Endothelial cell of umbilical vein (primary cell): ENCODE measurements at regions of chr1 and their contacts with region 1.

Region 1: DNA sequence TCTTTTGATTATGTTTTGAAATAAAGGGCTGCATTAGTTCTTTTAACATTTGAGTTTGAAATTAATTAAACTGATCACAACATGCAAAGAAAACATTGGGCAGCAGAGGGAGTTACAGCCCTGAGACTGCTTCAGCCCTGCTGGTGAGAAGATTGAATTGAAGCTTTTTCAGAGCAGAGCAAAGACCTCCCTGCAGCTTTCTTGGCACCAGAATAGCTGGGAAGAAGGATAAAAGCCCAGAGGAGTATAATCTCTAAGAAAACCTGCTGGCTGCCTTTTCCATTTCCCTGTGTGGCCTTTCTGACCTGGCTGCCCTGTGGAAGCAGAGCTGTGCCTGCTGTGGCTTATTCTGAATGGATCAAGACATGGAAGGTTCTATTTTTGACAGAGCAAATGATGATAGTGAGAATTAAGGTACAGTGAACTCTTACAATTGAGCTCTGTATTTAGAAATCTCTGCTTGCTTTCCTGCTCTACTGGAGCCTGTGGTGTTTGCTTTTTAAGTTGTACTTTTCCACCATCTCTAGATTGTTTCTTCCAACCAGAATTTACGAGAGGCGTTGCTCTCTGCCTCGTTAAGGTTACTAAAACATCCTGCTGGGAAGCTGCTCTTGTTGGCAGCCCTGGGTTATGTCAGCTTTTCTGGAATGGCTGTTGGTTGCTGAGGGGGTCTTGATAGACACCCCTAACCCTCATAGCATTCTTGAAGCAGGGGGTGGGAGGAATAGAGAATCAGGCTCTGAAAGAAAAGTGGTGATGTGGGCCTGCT is 9.9 kb downstream of the SNRPE start:
- DNase-seq: peak; percentile 82
- H3K4me3 ChIP-seq: no peak overlapping the region
- H3K27ac ChIP-seq: no peak overlapping the region
- H3K4me1 ChIP-seq: peaks cover 14% of the 10 kb centered on the region
- H3K27me3 ChIP-seq: no peaks in the 10 kb centered on the region
- CTCF ChIP-seq: peak; percentile 86 to 90
- POLR2A ChIP-seq: no peak

Region 2: DNA sequence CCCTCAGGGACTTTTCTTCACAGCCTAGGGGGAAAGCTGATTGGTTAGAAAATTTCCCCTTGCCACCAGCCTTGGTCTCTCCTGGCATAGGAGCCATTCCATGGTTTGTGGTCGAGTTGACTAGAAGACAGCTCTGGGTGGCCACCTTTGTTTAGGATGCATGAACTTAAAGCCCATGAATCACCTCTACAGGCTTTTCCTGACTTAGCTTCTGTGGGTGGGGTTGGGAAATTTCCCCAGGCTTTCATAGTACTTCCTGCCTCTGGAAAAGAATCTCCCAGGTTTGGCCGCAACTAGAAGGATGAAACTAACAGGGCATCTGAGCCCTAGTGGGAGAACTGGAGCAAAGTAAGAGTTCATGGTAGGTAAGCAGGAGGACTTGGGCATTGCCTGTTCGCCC is 62.7 kb after region 1 on chr1:
- CTCF ChIA-PET with region 1: interaction called, 12 read pairs
- POLR2A ChIA-PET with region 1: no interaction called
- dilution Hi-C with region 1: no loop called
- intact Hi-C with region 1: no loop called
- DNase-seq: no peak
- H3K4me3 ChIP-seq: no peak overlapping the region
- H3K27ac ChIP-seq: no peak overlapping the region
- H3K4me1 ChIP-seq: no peaks in the 10 kb centered on the region
- H3K27me3 ChIP-seq: peaks cover 4 to 13% of the 10 kb centered on the region in 2 experiments
- CTCF ChIP-seq: no peak
- POLR2A ChIP-seq: no peak

Region 3: GRCh38 chr1:204051258-204051657 is 180.0 kb after region 1 on chr1:
- CTCF ChIA-PET with region 1: interaction called, 15 read pairs
- POLR2A ChIA-PET with region 1: no interaction called
- dilution Hi-C with region 1: no loop called
- intact Hi-C with region 1: no loop called
- DNase-seq: no peak
- H3K4me3 ChIP-seq: no peak overlapping the region
- H3K27ac ChIP-seq: no peak overlapping the region
- H3K4me1 ChIP-seq: no peaks in the 10 kb centered on the region
- H3K27me3 ChIP-seq: no peaks in the 10 kb centered on the region
- CTCF ChIP-seq: no peak
- POLR2A ChIP-seq: no peak

Region 4: GRCh38 chr1:204072931-204073836 is 201.9 kb after region 1 on chr1 and contains the start of gene SOX13:
- CTCF ChIA-PET with region 1: interaction called, 83 read pairs
- POLR2A ChIA-PET with region 1: interaction called, 4 read pairs
- dilution Hi-C with region 1: no loop called
- intact Hi-C with region 1: loop called (anchors 1 kb)
- DNase-seq: peak; percentile 86
- H3K4me3 ChIP-seq: peak within 1 kb of the TSS; percentile 42 to 73 (median 66)
- H3K27ac ChIP-seq: peak within 1 kb of the TSS; percentile 27
- H3K4me1 ChIP-seq: peaks cover 14% of the 10 kb centered on the region
- H3K27me3 ChIP-seq: no peaks in the 10 kb centered on the region
- CTCF ChIP-seq: peak in 1 of 2 donors; percentile 10
- POLR2A ChIP-seq: peak; percentile 94
- total RNA-seq, gene SOX13: 38.0 and 40.8 TPM in 2 replicates

Region 5: DNA sequence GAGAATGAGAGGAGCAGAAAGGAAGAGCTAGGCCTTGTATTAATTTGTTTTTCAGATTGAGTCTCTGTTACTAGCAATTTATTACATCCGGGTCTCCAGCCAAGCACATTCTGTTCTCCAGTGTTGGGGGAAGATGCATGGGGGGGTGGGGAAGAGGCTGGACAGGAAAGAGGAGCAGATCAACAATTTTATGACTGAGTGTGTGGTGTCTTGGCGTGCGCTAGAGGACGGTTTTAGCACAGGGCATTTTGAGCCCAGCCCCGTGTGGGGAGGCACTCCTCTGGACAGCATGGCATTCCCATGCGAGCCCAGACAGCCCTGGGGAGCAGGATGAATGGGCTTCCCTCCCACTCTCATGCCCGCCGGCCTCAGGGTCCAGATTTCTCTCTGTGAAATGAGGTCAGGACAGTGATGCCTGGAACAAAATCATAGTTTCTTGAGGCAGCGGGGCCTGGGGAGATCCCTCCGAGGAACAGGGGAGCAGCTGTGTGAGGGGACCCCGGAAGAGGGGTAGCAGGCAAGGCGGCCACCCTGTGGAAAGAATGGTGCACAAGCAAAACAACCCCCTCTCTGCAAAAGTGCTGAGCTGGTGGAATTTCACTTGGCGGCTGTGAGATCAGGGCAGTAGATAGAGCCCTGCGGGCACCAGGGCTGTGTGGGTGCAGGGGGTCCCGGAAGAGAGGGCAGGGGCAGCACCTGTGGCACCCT is 217.9 kb after region 1 on chr1:
- CTCF ChIA-PET with region 1: interaction called, 13 read pairs
- POLR2A ChIA-PET with region 1: no interaction called
- dilution Hi-C with region 1: no loop called
- intact Hi-C with region 1: no loop called
- DNase-seq: peak; percentile 50
- H3K4me3 ChIP-seq: no peak overlapping the region
- H3K27ac ChIP-seq: peak overlapping the region; percentile 6
- H3K4me1 ChIP-seq: peaks cover 25% of the 10 kb centered on the region
- H3K27me3 ChIP-seq: no peaks in the 10 kb centered on the region
- CTCF ChIP-seq: no peak
- POLR2A ChIP-seq: no peak

Region 6: GRCh38 chr1:204114606-204115005 is 243.3 kb after region 1 on chr1:
- CTCF ChIA-PET with region 1: interaction called, 903 read pairs
- POLR2A ChIA-PET with region 1: no interaction called
- dilution Hi-C with region 1: no loop called
- intact Hi-C with region 1: no loop called
- DNase-seq: no peak
- H3K4me3 ChIP-seq: no peak overlapping the region
- H3K27ac ChIP-seq: no peak overlapping the region
- H3K4me1 ChIP-seq: peaks cover 9% of the 10 kb centered on the region
- H3K27me3 ChIP-seq: no peaks in the 10 kb centered on the region
- CTCF ChIP-seq: no peak
- POLR2A ChIP-seq: no peak

Region 7: DNA sequence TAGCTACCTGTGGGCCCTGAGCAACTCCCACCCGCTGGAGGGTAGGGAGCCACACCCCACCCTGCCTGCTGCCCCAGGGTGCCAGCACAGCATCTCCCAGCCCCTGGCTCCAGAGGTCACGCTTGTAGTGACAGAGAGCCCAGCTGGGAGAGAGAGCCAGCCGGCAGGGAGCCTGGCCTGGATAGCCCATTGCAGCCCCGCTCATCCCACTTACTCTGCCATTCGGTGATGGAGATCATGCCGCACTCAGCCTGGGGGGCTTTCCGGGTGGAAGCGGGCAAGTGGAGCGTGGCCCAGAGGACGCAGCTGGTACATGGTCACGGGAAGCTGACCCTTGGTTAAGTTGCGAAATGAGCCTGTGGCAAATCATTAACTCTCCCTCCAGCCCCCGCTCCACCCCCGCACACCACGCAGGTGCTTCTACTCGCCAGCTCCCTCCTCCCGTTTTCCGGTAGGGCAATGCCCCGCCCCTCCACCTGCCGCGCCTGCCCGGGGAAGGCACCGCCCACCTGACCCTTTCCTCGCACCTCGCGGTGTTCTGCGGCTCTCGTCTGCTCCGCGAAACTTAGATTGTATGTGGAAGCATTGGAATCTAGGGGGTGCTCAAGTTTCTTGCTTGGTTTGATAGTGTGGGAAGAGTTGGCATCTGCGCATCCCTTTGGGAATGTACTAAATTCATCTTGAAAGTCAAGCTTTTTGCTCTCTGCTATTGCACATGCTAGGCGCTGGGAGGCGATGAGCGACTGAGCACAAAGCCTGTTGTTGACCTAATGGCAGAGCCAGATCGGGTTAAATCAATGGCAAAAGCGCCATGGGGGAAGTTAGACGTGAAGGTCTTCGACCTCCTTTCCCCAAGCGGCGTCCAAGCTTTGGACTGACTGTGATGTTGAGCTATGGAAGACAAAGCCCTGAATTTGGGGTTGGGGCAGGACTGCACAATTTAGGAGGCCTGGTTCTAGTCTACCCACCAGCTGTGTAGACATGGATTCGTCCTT is 342.7 kb after region 1 on chr1 and contains the start of gene GOLT1A:
- CTCF ChIA-PET with region 1: no interaction called
- POLR2A ChIA-PET with region 1: no interaction called
- dilution Hi-C with region 1: no loop called
- intact Hi-C with region 1: no loop called
- DNase-seq: peak; percentile 75
- H3K4me3 ChIP-seq: no peak within 1 kb of the TSS
- H3K27ac ChIP-seq: no peak within 1 kb of the TSS
- H3K4me1 ChIP-seq: no peaks in the 10 kb centered on the region
- H3K27me3 ChIP-seq: no peaks in the 10 kb centered on the region
- CTCF ChIP-seq: peak; percentile 75
- POLR2A ChIP-seq: no peak
- total RNA-seq, gene GOLT1A: not detected in 2 replicates